ENCODE measurements at regions of chr15 and their contacts with region 1.

Region 1: DNA sequence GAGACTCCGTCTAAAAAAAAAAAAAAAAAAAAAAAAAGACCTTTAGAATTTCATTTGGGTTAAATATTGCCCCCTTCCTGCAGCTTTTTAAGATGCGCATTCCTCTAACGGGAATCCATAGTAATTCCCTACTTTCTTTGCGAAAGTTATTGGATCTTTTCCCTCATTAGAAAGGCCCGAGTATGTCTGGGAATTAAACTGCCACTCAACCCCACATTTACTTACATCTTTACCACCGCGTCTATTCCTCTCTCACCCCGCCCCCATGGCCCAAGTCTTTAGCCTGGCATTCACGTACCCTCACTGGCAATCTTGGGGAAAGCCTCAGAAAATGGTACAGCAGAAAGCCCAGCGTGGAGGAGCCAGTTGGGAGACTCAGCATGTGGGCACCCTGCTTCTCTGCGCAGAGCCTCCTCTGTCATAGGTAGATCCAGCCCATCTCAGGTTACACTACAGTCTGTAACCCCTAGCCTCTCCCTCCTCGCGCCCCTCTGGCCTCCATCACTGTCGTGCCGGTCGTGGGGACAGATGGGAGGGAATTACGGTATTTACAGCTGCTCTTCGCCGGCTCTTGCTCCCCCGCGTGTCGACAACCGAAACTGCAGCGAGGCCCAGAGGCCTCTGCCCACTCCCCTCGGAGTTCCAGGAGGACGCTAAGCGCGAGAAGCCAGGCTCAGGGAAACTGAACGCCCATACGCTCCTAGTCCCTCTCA is 6.4 kb upstream of the ANKDD1A start:
- DNase-seq: peak; percentile 81 to 92 (median 83)
- ATAC-seq: peak; percentile 68 to 95 (median 94)
- H3K4me3 ChIP-seq: peak overlapping the region in 10 of 12 donors; percentile 10 to 59 (median 44)
- H3K27ac ChIP-seq: peak overlapping the region in 4 of 12 donors; percentile 5 to 59 (median 42)
- H3K4me1 ChIP-seq: peaks cover 0 to 38% (median 2%) of the 10 kb centered on the region in 12 donors
- H3K27me3 ChIP-seq: peaks cover 0 to 2% (median 0%) of the 10 kb centered on the region in 9 donors
- CTCF ChIP-seq: peak; percentile 82 to 96 (median 91)
- POLR2A ChIP-seq: no peak

Region 2: DNA sequence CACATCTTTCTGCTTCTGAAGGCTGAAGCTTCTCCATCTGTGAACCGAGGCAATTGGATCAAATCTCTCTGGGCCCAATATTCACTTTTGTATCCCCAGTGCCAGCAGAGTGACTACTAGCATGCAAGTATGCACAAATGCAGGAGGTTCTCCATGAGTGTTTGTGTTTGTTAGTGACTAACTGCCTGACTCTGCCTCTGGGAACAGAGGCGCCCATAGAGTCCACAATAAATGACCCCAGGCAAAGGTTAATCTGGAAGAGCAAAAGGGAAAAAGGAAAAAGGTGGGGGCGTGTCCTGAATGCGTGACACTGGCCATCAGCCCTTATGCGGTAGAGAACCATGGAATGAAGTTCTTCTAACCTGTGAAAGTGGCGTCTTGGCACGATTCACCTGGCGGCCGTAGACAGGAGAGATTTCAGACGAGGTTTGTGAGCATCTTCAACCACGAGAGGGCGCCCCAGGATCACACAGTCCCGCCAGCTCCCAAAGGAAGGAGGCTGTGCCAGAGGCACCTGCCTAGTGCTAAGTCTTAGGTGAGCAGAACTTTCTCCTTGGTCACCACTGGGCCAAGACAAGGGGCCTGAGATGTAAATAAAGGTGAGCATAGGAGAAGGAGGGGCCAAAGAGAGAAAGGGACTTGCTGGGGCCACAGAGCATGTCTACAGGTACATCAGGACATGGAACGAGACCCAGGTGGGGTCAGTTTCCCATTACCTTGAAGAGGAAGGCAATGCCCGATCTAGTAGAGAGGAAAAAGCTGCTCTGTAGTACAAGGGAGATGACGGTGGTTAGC is 174.1 kb before region 1 on chr15:
- intact Hi-C with region 1: loop called in 9 of 10 experiments (anchors 1 to 5 kb)
- DNase-seq: peak; percentile 81 to 89 (median 83)
- ATAC-seq: peak; percentile 47 to 79 (median 70)
- H3K4me3 ChIP-seq: no peak overlapping the region
- H3K27ac ChIP-seq: peak overlapping the region in 1 of 12 donors; percentile 19
- H3K4me1 ChIP-seq: peaks cover 0 to 14% (median 0%) of the 10 kb centered on the region in 12 donors
- H3K27me3 ChIP-seq: no peaks in the 10 kb centered on the region
- CTCF ChIP-seq: peak; percentile 82 to 96 (median 90)
- POLR2A ChIP-seq: no peak

Region 3: DNA sequence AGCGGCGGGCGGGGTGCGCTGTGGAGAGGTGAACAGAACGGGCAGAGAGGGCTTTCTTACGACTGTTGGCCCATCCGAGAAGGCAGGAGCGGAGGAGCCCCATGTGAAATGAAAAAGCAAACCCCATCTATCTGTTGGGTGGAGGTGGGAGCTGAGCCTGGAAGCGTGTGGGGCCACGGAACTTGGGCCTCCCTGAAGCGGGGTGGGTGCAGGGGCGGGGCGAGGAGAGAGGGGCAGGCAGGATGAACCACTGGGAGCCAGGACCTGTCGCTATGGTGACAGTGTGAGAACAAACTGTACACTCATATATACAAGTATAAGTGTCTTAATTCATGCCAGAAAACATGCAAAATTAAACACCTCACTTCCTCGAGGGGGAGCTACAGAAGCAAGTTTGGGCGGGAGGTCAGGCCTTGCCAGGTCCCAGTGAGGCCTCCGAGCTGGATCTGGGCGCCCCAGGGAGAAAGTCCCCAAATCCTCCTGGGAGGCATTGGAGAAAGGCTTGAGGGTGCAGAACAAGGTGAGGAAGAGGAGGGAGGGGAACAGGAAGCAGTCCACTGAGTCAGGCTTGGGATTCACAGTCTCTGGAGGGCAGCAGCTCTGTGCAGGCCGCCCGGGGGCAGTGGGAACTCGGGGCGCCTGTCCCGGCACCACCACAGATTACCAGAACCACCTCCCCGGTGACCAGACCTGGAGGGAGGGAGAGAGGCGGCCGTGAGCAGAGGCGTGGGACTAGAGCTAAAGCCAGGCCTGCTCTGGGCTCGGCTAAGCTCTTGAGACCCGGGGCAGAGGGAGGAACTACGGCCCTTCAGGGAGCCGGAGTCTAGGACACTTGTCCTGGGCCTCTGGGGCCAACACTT is 164.7 kb before region 1 on chr15:
- intact Hi-C with region 1: loop called in 3 of 10 experiments (anchors 1 to 5 kb)
- DNase-seq: peak; percentile 58 to 87 (median 72)
- ATAC-seq: peak; percentile 88 to 91 (median 90)
- H3K4me3 ChIP-seq: peak overlapping the region in 6 of 12 donors; percentile 1 to 40 (median 12)
- H3K27ac ChIP-seq: peak overlapping the region; percentile 7 to 90 (median 60)
- H3K4me1 ChIP-seq: peaks cover 0 to 59% (median 24%) of the 10 kb centered on the region in 12 donors
- H3K27me3 ChIP-seq: no peaks in the 10 kb centered on the region
- CTCF ChIP-seq: peak in 10 of 12 donors; percentile 10 to 54 (median 38)
- POLR2A ChIP-seq: peak in 1 of 2 donors; percentile 10

Region 4: GRCh38 chr15:64825431-64826294 is 79.6 kb before region 1 on chr15 and contains the start of gene PIF1:
- intact Hi-C with region 1: loop called in 1 of 10 experiments (anchors 5 kb)
- DNase-seq: peak; percentile 83 to 93 (median 92)
- ATAC-seq: peak; percentile 97 to 99 (median 98)
- H3K4me3 ChIP-seq: peak within 1 kb of the TSS; percentile 6 to 65 (median 52)
- H3K27ac ChIP-seq: peak within 1 kb of the TSS in 11 of 12 donors; percentile 56 to 80 (median 71)
- H3K4me1 ChIP-seq: peaks cover 3 to 31% (median 22%) of the 10 kb centered on the region in 12 donors
- H3K27me3 ChIP-seq: peaks cover 0 to 10% (median 0%) of the 10 kb centered on the region in 9 donors
- CTCF ChIP-seq: no peak
- POLR2A ChIP-seq: peak; percentile 72 to 92
- total RNA-seq, gene PIF1: 0.23 to 4.6 (median 0.52) TPM in 7 of 9 donors, not detected in the others

Measured in heart left ventricle (tissue), 16 donors.